ENCODE measurements at regions of chr6 and their contacts with region 1.

Region 1: DNA sequence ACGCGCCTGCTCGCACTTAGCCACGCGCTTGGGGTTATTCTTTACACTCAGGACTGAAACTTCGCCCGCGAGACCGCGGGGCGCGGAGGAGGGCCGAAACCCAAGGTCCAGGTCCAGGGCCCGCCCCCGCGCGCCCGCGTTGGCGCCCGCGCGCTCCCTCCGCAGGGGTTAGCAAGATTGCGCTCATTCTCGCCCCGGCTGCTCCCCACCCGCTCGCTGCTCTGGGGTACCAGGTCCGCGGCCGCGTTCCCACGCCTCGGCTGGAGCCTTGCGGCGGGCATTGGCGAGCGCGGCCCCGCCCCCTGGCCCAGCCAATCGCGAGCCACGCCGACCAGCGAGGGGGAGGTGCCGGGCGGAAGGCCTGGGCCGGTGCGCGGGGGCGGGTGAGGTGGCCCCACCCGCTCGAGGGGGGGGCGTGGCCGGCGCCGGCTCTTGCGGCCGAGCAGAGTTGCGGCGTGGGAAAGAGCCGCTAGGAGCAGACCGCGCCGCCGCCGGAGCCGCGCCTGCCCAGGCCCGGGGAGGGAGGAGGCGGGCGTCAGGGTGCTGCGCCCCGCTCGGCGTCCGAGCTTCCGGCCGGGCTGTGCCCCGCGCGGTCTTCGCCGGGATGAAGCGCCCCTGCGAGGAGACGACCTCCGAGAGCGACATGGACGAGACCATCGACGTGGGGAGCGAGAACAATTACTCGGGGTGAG is at the start of gene HEY2:
- DNase-seq: peak; percentile 83
- H3K4me3 Mint-ChIP-seq: peak within 1 kb of the TSS; percentile 83
- H3K27ac Mint-ChIP-seq: peak within 1 kb of the TSS; percentile 49
- H3K4me1 Mint-ChIP-seq: peaks cover 45% of the 10 kb centered on the region
- H3K27me3 Mint-ChIP-seq: peaks cover 67% of the 10 kb centered on the region
- total RNA-seq, gene HEY2: not detected in 2 replicates

Region 2: DNA sequence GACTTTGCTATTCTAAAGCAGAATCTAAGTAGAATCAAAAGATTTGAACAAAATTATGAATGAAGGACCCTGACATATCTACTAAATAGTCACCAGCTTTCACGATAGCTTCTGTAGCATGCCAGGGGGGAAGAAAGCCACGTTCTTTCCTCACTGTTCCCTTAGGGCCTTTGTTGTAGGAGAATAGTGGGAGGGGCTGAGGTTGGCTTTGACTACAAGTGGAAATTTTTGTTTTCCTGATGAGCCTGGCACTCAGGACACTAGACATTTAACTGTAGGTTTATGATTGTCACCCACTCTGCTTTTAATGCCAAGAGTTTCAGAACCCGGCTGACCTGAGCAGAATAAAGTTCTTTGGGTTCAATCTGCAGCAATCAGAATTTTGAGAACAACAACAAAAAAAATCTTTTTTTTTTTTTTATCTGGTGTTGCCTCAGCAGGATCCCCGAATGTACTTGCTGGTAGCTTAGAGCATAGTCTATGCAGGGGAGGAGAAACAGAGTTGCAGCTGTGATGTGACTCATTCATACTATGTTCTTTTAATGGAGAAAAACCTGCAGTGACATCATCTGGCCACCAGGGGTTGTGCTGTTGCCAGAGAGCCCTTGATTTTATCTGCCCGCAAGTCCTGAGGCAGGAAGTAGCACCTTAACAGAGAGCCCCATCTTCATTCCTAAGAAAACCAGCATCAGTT is 557.3 kb before region 1 on chr6:
- intact Hi-C with region 1: loop called (anchors 5 kb)
- DNase-seq: peak; percentile 40
- H3K4me3 Mint-ChIP-seq: no peak overlapping the region
- H3K27ac Mint-ChIP-seq: no peak overlapping the region
- H3K4me1 Mint-ChIP-seq: peaks cover 8% of the 10 kb centered on the region
- H3K27me3 Mint-ChIP-seq: peaks cover 9% of the 10 kb centered on the region

Region 3: DNA sequence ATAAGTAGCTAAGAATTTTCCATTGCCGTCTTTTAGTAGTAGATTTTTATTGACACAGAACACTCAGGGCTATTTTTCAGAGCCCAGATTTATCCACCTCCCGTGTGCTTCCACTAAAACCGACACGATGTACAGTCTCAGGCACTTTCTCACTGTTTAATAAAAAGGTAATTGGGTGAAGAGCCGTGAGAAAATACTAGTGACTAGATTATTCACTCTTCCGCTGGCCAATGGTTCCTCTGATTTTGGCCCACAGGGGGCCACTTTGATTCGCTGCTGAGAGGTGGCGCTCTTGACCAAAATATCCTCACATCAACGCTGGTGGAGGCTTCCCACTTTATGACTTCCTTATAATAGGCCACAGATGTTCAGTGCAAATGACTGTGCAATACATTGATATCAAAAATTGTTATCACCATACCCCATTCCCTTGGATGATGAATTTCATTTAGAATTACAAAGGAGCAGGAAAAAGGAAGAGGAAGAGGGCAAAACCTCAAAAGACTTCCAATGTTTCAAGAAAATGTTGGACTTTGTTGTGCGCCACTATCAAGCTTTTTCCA is 435.2 kb before region 1 on chr6:
- intact Hi-C with region 1: loop called (anchors 1 kb)
- DNase-seq: peak; percentile 17
- H3K4me3 Mint-ChIP-seq: no peak overlapping the region
- H3K27ac Mint-ChIP-seq: no peak overlapping the region
- H3K4me1 Mint-ChIP-seq: no peaks in the 10 kb centered on the region
- H3K27me3 Mint-ChIP-seq: peaks cover 6% of the 10 kb centered on the region

Region 4: DNA sequence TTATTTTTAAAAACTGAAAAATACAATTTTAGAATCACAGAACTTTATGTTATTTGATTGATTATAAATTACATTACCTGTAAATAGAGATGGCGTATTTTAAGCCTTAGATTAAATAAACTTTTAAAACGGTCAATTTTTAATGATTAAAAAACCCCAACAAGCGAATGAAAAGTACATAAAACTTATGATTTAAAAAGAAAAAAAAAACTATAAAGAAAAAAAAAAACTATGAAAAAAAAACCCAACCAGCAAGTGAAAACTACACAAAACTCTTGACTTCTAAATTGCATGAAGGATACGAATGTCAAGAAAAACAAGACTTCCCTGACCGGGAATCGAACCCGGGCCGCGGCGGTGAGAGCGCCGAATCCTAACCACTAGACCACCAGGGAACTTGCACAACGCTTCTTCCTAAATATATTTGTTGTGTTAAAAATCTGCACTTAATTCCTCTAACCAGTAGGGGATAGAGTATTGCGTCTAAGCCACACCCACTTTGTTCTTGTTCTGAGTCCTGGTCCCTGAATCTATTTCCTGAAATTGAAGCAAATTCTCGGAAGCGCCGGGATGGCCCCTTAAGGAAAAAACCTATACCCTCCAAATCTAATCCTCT is 30.7 kb after region 1 on chr6:
- intact Hi-C with region 1: loop called (anchors 1 kb)
- DNase-seq: peak; percentile 68
- H3K4me3 Mint-ChIP-seq: no peak overlapping the region
- H3K27ac Mint-ChIP-seq: no peak overlapping the region
- H3K4me1 Mint-ChIP-seq: peaks cover 12% of the 10 kb centered on the region
- H3K27me3 Mint-ChIP-seq: peaks cover 15% of the 10 kb centered on the region

Region 5: DNA sequence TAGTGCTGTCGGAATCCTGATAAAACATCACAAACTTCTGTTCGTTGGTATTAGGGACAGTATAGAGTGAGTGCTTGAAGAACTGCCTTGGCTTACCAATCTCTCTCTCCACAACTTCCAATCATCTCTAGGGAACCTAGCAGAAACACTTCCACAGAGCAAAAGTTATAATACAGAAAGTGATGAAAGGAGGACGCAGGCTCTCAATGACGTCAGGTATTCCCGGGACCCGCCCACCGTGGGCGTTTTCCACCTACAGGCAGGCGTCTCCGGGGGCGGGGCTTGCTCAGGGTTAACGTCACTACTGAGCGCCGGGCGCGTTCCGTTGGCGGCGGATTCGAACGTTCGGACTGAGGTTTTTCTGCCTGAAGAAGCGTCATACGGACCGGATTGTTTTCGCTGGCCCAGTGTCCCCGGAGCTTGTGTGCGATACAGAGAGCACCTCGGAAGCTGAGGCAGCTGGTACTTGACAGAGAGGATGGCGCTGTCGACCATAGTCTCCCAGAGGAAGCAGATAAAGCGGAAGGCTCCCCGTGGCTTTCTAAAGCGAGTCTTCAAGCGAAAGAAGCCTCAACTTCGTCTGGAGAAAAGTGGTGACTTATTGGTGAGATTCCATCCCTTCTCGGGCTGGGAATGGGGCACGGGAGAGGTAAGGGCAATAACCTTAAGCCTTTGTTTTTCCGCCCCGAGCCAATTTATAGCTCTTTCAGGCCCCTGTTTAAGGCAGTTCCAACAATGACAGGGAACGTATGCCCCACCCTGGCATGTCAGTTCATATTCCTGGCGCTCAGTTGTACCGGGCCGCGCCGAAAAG is 590.7 kb after region 1 on chr6 and contains the start of gene CENPW:
- intact Hi-C with region 1: loop called (anchors 2 kb)
- DNase-seq: peak; percentile 92
- H3K4me3 Mint-ChIP-seq: no peak within 1 kb of the TSS
- H3K27ac Mint-ChIP-seq: no peak within 1 kb of the TSS
- H3K4me1 Mint-ChIP-seq: peaks cover 27% of the 10 kb centered on the region
- H3K27me3 Mint-ChIP-seq: no peaks in the 10 kb centered on the region
- total RNA-seq, gene CENPW: 43.4 and 44.2 TPM in 2 replicates